H1 (cell line): ENCODE measurements at regions of chr9 and their contacts with region 1.

Region 1: GRCh38 chr9:136170006-136170901 is 34.7 kb downstream of the LHX3 start:
- DNase-seq: peak in 1 of 2 experiments; percentile 92
- H3K4me3 ChIP-seq: no peak overlapping the region
- H3K27ac ChIP-seq: no peak overlapping the region
- H3K4me1 ChIP-seq: peaks cover 0 to 21% (median 17%) of the 10 kb centered on the region in 4 experiments; a peak in 6 of 7 replicates
- H3K27me3 ChIP-seq: no peaks in the 10 kb centered on the region
- CTCF ChIP-seq: peak in 2 of 3 experiments; percentile 82 to 88; a peak in 3 of 4 replicates
- EP300 ChIP-seq: no peak
- POLR2A ChIP-seq: no peak
- RAD21 ChIP-seq: peak; percentile 79 to 84

Region 2: GRCh38 chr9:135961277-135961705 is 209.0 kb before region 1 on chr9 and contains the start of gene UBAC1:
- CTCF ChIA-PET with region 1: no interaction called
- POLR2A ChIA-PET with region 1: no interaction called
- DNase-seq: peak; percentile 79 to 93
- H3K4me3 ChIP-seq: peak within 1 kb of the TSS; percentile 76 to 90 (median 82)
- H3K27ac ChIP-seq: 0 out of 2 replicates have a peak within 1 kb of the TSS, but pooled peaks have one; percentile 37
- H3K4me1 ChIP-seq: peaks cover 4 to 7% (median 5%) of the 10 kb centered on the region in 4 experiments; a peak in 5 of 7 replicates
- H3K27me3 ChIP-seq: no peaks in the 10 kb centered on the region
- CTCF ChIP-seq: peak in 1 of 3 experiments; percentile 18; a peak in 2 of 4 replicates
- EP300 ChIP-seq: no peak
- POLR2A ChIP-seq: no peak
- RAD21 ChIP-seq: no peak
- total RNA-seq, gene UBAC1: 59.3 and 63.1 TPM in 2 replicates

Region 3: GRCh38 chr9:136138566-136138965 is 31.7 kb before region 1 on chr9:
- CTCF ChIA-PET with region 1: interaction called, 16 read pairs
- POLR2A ChIA-PET with region 1: no interaction called
- DNase-seq: peak; percentile 66 to 95
- H3K4me3 ChIP-seq: 0 out of 8 replicates have a peak overlapping the region, but pooled peaks of 1 of the 4 experiments have one; percentile 20
- H3K27ac ChIP-seq: no peak overlapping the region
- H3K4me1 ChIP-seq: peaks cover 3 to 28% (median 18%) of the 10 kb centered on the region in 4 experiments
- H3K27me3 ChIP-seq: peaks cover 4 to 10% (median 10%) of the 10 kb centered on the region in 4 experiments; a peak in 6 of 7 replicates
- CTCF ChIP-seq: peak in 2 of 3 experiments; percentile 78 to 95; a peak in 3 of 4 replicates
- EP300 ChIP-seq: no peak
- POLR2A ChIP-seq: no peak
- RAD21 ChIP-seq: peak; percentile 68 to 77

Region 4: DNA sequence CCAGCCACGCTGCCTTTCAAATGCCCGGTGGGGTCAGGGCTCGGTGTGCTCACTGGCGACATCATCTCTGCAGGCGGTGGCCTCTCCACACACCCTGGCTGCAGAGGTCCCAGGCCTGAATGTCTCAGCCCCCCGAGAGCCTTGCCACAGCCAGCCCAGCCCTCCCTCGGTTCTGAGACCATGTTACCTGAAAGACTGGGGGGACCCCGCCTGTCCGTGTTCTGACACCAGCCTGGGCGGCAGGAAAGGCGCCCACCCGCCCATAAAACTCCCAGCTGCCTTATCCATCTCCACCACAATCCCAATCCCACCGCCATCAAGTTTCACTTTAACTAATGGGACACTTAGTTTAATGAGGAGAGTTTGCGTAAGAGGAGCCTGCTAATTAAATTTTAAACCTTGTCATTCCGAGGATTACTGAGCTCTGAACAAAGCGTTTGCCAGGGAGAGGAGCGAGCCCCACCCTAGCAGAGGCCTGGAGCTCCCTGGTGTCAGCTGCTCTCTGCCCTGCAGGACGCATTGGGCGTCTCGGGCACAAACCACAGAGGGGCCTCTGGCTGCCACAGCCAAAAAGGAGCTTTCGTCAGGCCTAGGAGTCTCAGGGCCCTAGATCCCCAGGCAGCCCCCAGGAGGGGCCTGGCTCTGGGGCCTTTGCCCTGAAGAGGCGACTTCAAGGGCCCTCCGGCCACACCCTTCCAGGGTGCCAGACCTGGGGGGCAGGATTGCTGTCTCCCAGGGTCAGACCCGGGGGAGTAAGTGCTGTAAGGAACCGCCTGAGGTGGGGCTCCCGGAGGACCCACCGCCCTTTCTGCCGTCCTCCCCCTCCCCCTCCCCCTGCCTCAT is 19.4 kb after region 1 on chr9:
- CTCF ChIA-PET with region 1: interaction called, 62 read pairs
- POLR2A ChIA-PET with region 1: interaction called, 4 read pairs
- DNase-seq: peak in 1 of 2 experiments; percentile 50
- H3K4me3 ChIP-seq: no peak overlapping the region
- H3K27ac ChIP-seq: no peak overlapping the region
- H3K4me1 ChIP-seq: peaks cover 0 to 11% (median 6%) of the 10 kb centered on the region in 4 experiments; a peak in 5 of 7 replicates
- H3K27me3 ChIP-seq: peaks cover 33 to 49% (median 46%) of the 10 kb centered on the region in 4 experiments
- CTCF ChIP-seq: no peak
- EP300 ChIP-seq: no peak
- POLR2A ChIP-seq: no peak
- RAD21 ChIP-seq: no peak

Region 5: GRCh38 chr9:136220017-136220729 is 49.9 kb after region 1 on chr9:
- CTCF ChIA-PET with region 1: interaction called, 47 read pairs
- POLR2A ChIA-PET with region 1: no interaction called
- DNase-seq: no peak
- H3K4me3 ChIP-seq: no peak overlapping the region
- H3K27ac ChIP-seq: no peak overlapping the region
- H3K4me1 ChIP-seq: peaks cover 0 to 2% (median 0%) of the 10 kb centered on the region in 4 experiments; a peak in 2 of 7 replicates
- H3K27me3 ChIP-seq: no peaks in the 10 kb centered on the region
- CTCF ChIP-seq: no peak
- EP300 ChIP-seq: no peak
- POLR2A ChIP-seq: no peak
- RAD21 ChIP-seq: no peak

Region 6: DNA sequence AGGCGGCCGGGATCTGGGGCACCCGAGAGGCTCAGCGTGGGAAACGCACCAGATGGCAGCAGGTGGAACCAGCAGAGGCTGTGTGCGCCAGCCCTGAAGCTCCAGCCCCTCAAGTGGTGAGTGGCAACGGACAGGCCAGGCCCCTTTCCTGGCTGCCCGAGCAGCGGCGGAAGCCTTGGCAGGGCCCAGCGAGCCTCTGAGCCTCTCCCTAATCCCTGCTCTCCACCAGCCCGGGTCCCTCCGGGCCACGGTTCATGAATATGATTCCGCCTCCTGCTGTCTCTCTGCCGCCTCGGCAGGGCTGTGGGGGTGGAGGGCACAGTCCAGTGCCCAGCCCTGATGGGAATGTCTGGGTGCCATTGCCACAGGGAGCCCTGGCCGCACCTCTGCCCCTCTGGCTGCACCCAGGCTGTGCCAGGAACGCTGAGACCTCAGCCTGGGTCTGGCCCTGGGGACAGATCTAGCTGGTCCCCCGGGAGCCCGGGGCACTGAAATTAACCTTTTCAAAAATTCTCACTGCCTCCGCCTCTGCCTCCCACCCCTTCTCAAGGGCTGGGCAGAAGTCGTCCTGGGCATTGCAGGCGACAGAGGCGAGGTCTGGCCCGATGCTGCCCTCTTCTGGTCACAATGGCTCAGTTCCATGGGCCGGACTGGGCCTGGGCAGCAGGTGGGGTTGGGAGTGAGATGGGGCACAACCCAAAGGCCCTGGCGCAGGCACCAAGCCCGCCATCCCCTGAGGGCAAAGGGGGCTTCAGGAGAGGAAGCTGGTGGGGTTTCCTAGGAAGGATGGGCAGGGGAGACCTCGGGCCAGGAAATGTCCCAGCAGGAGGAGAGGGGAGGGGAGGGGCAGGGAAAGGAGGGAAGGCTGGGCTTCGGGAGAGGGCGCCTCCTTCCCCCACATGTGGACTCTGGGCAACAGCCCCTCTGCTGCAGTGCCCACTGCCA is 113.3 kb after region 1 on chr9:
- CTCF ChIA-PET with region 1: interaction called, 20 read pairs
- POLR2A ChIA-PET with region 1: no interaction called
- DNase-seq: peak; percentile 43 to 93
- H3K4me3 ChIP-seq: no peak overlapping the region
- H3K27ac ChIP-seq: no peak overlapping the region
- H3K4me1 ChIP-seq: peaks cover 0 to 4% (median 2%) of the 10 kb centered on the region in 4 experiments; a peak in 3 of 7 replicates
- H3K27me3 ChIP-seq: no peaks in the 10 kb centered on the region
- CTCF ChIP-seq: peak in 2 of 3 experiments; percentile 89 to 92; a peak in 3 of 4 replicates
- EP300 ChIP-seq: no peak
- POLR2A ChIP-seq: no peak
- RAD21 ChIP-seq: peak; percentile 86 to 92